MCF 10A (cell line): ENCODE measurements at regions of chr1 and their contacts with region 1.

Region 1: GRCh38 chr1:158087320-158087927 is 93.3 kb upstream of the CD1D start:
- DNase-seq: peak; percentile 85
- H3K4me3 Mint-ChIP-seq: no peak overlapping the region
- H3K27ac Mint-ChIP-seq: no peak overlapping the region
- H3K4me1 Mint-ChIP-seq: no peaks in the 10 kb centered on the region
- H3K27me3 Mint-ChIP-seq: no peaks in the 10 kb centered on the region
- CTCF ChIP-seq: peak; percentile 98

Region 2: GRCh38 chr1:157978586-157979403 is 108.6 kb before region 1 on chr1:
- CTCF ChIA-PET with region 1: interaction called, 10 read pairs
- POLR2A ChIA-PET with region 1: no interaction called
- intact Hi-C with region 1: no loop called
- DNase-seq: no peak
- H3K4me3 Mint-ChIP-seq: no peak overlapping the region
- H3K27ac Mint-ChIP-seq: no peak overlapping the region
- H3K4me1 Mint-ChIP-seq: no peaks in the 10 kb centered on the region
- H3K27me3 Mint-ChIP-seq: no peaks in the 10 kb centered on the region
- CTCF ChIP-seq: no peak

Region 3: DNA sequence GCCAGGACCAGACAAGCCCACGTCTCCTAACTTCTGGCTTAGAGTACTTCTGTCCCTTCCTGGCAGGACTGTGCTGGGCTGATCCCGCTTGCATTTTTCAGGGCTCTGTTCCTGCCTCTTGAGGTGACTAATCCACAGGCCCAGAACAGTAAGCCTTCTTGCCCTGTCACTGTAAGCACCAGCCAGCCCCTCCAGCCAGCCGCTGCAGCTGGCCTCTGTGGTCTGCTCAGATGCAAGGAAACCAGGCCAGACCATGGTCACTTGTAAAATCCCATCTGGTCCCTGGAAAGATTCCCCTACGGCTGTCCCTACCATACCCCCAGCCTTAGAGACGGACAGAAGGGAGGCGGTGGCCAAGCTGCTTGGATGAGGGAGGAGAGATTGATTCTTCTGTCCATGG is 19.8 kb before region 1 on chr1:
- CTCF ChIA-PET with region 1: interaction called, 11 read pairs
- POLR2A ChIA-PET with region 1: interaction called, 3 read pairs
- intact Hi-C with region 1: no loop called
- DNase-seq: no peak
- H3K4me3 Mint-ChIP-seq: no peak overlapping the region
- H3K27ac Mint-ChIP-seq: peak overlapping the region; percentile 4
- H3K4me1 Mint-ChIP-seq: peaks cover 27% of the 10 kb centered on the region
- H3K27me3 Mint-ChIP-seq: no peaks in the 10 kb centered on the region
- CTCF ChIP-seq: no peak

Region 4: DNA sequence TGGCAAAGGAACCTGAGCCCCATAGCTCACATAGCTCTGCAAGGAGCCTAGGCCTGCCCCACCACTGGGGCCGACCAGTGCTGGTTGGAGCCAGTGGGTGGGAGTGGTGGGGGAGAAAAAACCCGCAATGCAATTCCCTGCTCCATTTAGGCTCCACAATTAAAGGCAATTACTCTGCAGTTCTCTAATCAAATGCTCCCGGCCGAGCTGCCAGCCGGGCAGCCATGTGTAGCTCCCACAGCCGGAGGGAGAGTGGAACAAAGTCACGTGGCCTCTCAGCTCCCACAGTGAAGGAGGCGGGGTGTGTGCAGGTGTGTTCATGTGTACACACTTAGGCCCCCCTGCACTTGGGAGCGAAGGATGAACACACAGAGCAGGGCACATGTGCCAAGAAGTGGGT is 12.3 kb before region 1 on chr1:
- CTCF ChIA-PET with region 1: interaction called, 24 read pairs
- POLR2A ChIA-PET with region 1: no interaction called
- intact Hi-C with region 1: no loop called
- DNase-seq: no peak
- H3K4me3 Mint-ChIP-seq: no peak overlapping the region
- H3K27ac Mint-ChIP-seq: peak overlapping the region; percentile 1
- H3K4me1 Mint-ChIP-seq: peaks cover 16% of the 10 kb centered on the region
- H3K27me3 Mint-ChIP-seq: no peaks in the 10 kb centered on the region
- CTCF ChIP-seq: no peak

Region 5: GRCh38 chr1:158117854-158118704 is 30.7 kb after region 1 on chr1:
- CTCF ChIA-PET with region 1: interaction called, 628 read pairs
- POLR2A ChIA-PET with region 1: no interaction called
- intact Hi-C with region 1: loop called (anchors 2 kb)
- DNase-seq: peak; percentile 65
- H3K4me3 Mint-ChIP-seq: no peak overlapping the region
- H3K27ac Mint-ChIP-seq: no peak overlapping the region
- H3K4me1 Mint-ChIP-seq: peaks cover 11% of the 10 kb centered on the region
- H3K27me3 Mint-ChIP-seq: peaks cover 11% of the 10 kb centered on the region
- CTCF ChIP-seq: peak; percentile 55